ENCODE measurements at regions of chr17 and their contacts with region 1.

Region 1: DNA sequence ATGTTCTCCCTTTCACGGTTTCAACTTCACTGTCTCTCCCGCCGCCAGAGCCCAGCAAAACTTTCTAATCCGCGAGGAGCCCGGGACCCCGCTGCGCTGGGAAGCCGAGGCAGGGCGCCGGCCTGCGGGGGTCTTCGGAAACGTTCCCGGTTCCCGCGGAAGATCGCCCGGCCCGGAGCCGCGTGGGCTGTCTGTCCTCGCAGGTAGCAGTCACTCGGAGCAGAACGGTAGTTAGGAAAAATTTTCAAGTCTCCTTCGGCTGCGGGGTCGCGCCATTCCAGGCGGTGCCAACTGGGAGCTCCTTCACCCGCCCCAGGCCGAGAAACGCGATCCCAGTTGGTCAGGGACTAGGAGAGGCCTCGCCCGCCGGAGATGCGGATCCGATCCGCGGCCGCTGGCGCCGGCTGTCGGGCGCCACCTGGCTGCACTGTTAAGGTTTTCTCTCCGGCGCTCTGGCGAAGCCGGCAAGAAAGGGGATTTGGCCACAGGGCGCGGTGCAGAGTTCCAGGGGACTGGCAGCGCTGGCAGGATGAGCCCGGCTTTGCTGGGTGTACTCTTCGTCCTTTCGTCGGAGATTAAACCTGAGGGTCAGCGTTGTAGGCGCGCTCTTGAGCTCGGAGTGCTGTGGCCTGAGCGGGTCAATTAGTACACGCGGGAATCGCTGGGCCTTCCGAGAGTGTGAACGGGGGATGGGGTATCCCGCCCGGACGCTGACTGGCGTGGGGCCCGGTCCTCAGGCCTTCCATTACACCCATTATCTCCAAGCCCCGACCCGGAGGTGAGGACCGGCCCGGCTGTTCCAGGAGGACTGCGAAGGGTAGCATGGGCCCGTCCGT is 135.4 kb downstream of the KCNJ12 start:
- DNase-seq: peak; percentile 46 to 73 (median 52)
- ATAC-seq: peak; percentile 96
- H3K4me3 ChIP-seq: peak overlapping the region; percentile 29
- H3K27ac ChIP-seq: no peak overlapping the region
- H3K4me1 ChIP-seq: peaks cover 0 to 15% of the 10 kb centered on the region in 2 experiments; a peak in 2 of 5 replicates
- H3K27me3 ChIP-seq: peaks cover 0 to under 1% of the 10 kb centered on the region in 2 experiments; a peak in 1 of 5 replicates
- CTCF ChIP-seq: peak; percentile 67 to 83 (median 68)
- EP300 ChIP-seq: no peak
- POLR2A ChIP-seq: no peak
- RAD21 ChIP-seq: peak; percentile 53 to 75

Region 2: GRCh38 chr17:20997711-20998570 is 513.6 kb before region 1 on chr17:
- CTCF ChIA-PET with region 1: no interaction called
- POLR2A ChIA-PET with region 1: no interaction called
- in situ Hi-C with region 1: no loop called
- intact Hi-C with region 1: no loop called
- DNase-seq: no peak
- ATAC-seq: peak; percentile 19
- H3K4me3 ChIP-seq: no peak overlapping the region
- H3K27ac ChIP-seq: no peak overlapping the region
- H3K4me1 ChIP-seq: peaks cover 0 to 23% of the 10 kb centered on the region in 2 experiments; a peak in 2 of 5 replicates
- H3K27me3 ChIP-seq: no peaks in the 10 kb centered on the region
- CTCF ChIP-seq: peak in 2 of 3 experiments; percentile 5 to 9; a peak in 2 of 6 replicates
- EP300 ChIP-seq: no peak
- POLR2A ChIP-seq: peak; percentile 30; the same call in 1 of the 2 replicates
- RAD21 ChIP-seq: peak in 1 of 2 experiments; percentile 42; a peak in 1 of 4 replicates

Region 3: GRCh38 chr17:21275579-21276263 is 235.9 kb before region 1 on chr17:
- CTCF ChIA-PET with region 1: no interaction called
- POLR2A ChIA-PET with region 1: no interaction called
- in situ Hi-C with region 1: loop called (anchors 10 kb)
- intact Hi-C with region 1: loop called (anchors 2 kb)
- DNase-seq: peak; percentile 88 to 95 (median 93)
- ATAC-seq: peak; percentile 95
- H3K4me3 ChIP-seq: peak overlapping the region; percentile 44
- H3K27ac ChIP-seq: peak overlapping the region; percentile 31; the same call in 2 of the 3 replicates
- H3K4me1 ChIP-seq: peaks cover 28 to 51% of the 10 kb centered on the region in 2 experiments; a peak in 4 of 5 replicates
- H3K27me3 ChIP-seq: no peaks in the 10 kb centered on the region
- CTCF ChIP-seq: no peak
- EP300 ChIP-seq: no peak
- POLR2A ChIP-seq: peak; percentile 60
- RAD21 ChIP-seq: no peak

Region 4: DNA sequence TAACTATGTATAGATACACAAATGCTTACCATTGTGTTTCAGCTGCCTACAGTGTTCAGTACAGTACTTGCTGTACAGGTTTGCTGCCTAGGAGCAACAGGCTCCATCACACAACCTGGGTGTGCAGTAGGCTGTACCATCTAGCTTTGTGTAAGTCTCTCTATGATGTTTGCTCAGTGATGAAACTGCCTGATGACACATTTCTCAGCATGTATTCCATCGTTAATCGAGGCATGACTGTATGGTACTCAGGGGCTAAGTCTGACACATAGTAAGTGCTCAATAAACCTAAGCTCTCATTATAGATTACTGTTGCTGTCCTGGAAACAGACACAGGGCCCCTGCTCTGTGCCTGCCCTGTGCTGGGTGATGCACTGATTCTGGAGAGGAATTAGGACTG is 117.3 kb before region 1 on chr17:
- CTCF ChIA-PET with region 1: no interaction called
- POLR2A ChIA-PET with region 1: no interaction called
- in situ Hi-C with region 1: no loop called
- intact Hi-C with region 1: no loop called
- DNase-seq: no peak
- ATAC-seq: peak; percentile 32; the same call in 1 of the 3 replicates
- H3K4me3 ChIP-seq: no peak overlapping the region
- H3K27ac ChIP-seq: no peak overlapping the region
- H3K4me1 ChIP-seq: peaks cover 0 to 9% of the 10 kb centered on the region in 2 experiments; a peak in 2 of 5 replicates
- H3K27me3 ChIP-seq: peaks cover 0 to 40% of the 10 kb centered on the region in 2 experiments; a peak in 3 of 5 replicates
- CTCF ChIP-seq: no peak
- EP300 ChIP-seq: no peak
- POLR2A ChIP-seq: no peak
- RAD21 ChIP-seq: no peak

Region 5: DNA sequence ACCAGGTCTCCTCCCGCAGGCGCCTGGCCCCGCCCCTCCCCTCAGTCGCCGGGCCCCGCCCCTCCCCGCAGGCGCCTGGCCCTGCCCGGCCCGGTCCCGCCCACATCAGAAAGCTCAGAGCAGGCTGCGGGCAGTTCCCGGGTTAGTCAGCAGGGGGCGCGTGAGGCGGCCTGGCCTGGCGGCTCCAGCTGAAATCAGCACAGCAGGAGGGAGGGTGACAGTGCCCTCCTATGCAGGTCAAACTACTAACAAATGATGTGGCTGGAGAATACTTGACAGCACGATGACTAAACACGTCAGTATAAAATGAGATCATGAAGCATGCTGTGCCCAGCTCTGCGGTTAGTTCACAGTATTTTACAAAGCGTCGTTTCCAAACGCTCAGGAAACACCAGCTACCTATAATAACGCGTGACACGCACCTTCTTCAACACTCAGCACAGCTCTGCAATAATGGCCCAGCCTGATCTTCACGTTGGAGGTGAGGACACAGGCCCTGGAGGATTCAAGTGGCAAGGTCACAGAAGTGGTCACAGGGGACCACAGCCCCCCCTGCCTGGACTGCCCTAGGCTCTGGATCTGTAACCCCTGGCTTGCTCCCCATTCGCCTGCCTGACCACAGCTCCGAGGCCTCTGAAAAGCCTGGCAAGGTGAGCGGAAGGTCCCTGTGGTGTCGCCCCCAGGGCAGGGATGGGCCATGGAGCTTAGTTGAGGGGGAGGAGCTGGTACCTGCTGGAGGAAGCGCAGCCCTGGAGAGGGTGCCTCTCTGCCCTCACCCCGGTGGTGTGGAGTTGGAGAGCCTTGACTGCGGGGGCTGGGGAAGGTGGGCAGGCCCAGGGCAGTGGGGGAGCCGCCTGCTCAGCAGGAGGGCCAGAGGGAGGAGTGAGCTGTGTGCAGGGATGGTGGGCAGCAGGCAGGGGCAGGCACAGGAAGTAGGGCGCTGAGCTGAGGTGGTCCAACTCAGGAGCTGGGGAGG is 54.2 kb before region 1 on chr17:
- CTCF ChIA-PET with region 1: interaction called, 3 read pairs
- POLR2A ChIA-PET with region 1: no interaction called
- in situ Hi-C with region 1: loop called (anchors 5 kb)
- intact Hi-C with region 1: loop called (anchors 1 kb)
- DNase-seq: peak; percentile 87 to 95 (median 92)
- ATAC-seq: peak; percentile 99
- H3K4me3 ChIP-seq: no peak overlapping the region
- H3K27ac ChIP-seq: no peak overlapping the region
- H3K4me1 ChIP-seq: peaks cover 0 to 12% of the 10 kb centered on the region in 2 experiments; a peak in 4 of 5 replicates
- H3K27me3 ChIP-seq: peaks cover 0 to 6% of the 10 kb centered on the region in 2 experiments; a peak in 1 of 5 replicates
- CTCF ChIP-seq: peak; percentile 73 to 88 (median 80)
- EP300 ChIP-seq: no peak
- POLR2A ChIP-seq: no peak
- RAD21 ChIP-seq: peak; percentile 68 to 77

Region 6: GRCh38 chr17:21463779-21464407 is 47.7 kb before region 1 on chr17:
- CTCF ChIA-PET with region 1: no interaction called
- POLR2A ChIA-PET with region 1: no interaction called
- in situ Hi-C with region 1: loop called (anchors 5 kb)
- intact Hi-C with region 1: no loop called
- DNase-seq: no peak
- ATAC-seq: no peak
- H3K4me3 ChIP-seq: no peak overlapping the region
- H3K27ac ChIP-seq: no peak overlapping the region
- H3K4me1 ChIP-seq: peaks cover 0 to 10% of the 10 kb centered on the region in 2 experiments; a peak in 3 of 5 replicates
- H3K27me3 ChIP-seq: peaks cover 4 to 10% of the 10 kb centered on the region in 2 experiments; a peak in 4 of 5 replicates
- CTCF ChIP-seq: no peak
- EP300 ChIP-seq: no peak
- POLR2A ChIP-seq: no peak
- RAD21 ChIP-seq: no peak

Region 7: GRCh38 chr17:21482189-21482865 is 29.3 kb before region 1 on chr17:
- CTCF ChIA-PET with region 1: no interaction called
- POLR2A ChIA-PET with region 1: no interaction called
- in situ Hi-C with region 1: no loop called
- intact Hi-C with region 1: no loop called
- DNase-seq: no peak
- ATAC-seq: no peak
- H3K4me3 ChIP-seq: no peak overlapping the region
- H3K27ac ChIP-seq: no peak overlapping the region
- H3K4me1 ChIP-seq: no peaks in the 10 kb centered on the region
- H3K27me3 ChIP-seq: peaks cover 0 to 15% of the 10 kb centered on the region in 2 experiments; a peak in 2 of 5 replicates
- CTCF ChIP-seq: no peak
- EP300 ChIP-seq: no peak
- POLR2A ChIP-seq: no peak
- RAD21 ChIP-seq: no peak